ENCODE measurements at regions of chr1 and their contacts with region 1.

Region 1: GRCh38 chr1:84143796-84144565 is at the start of gene PRKACB:
- DNase-seq: no peak
- ATAC-seq: peak; percentile 53
- total RNA-seq, gene PRKACB: 35.2 TPM

Region 2: GRCh38 chr1:83606416-83606955 is 537.5 kb before region 1 on chr1:
- intact Hi-C with region 1: no loop called
- DNase-seq: no peak
- ATAC-seq: no peak

Region 3: GRCh38 chr1:84433258-84434080 is 289.5 kb after region 1 on chr1:
- intact Hi-C with region 1: loop called (anchors 2 kb)
- DNase-seq: peak; percentile 36
- ATAC-seq: peak; percentile 79

Measured in left ventricle myocardium superior (tissue), 1 donor.